Activated naive CD4-positive, alpha-beta T cell treated with anti-CD3 and anti-CD28 coated beads, Interleukin-2, amount 10 ng/mL, durations not matched to agents 7 days and 5 days (primary cell): ENCODE measurements at regions of chr3 and their contacts with region 1.

Region 1: GRCh38 chr3:107690522-107691138 is 167.9 kb downstream of the BBX start:
- DNase-seq: no peak
- H3K4me3 Mint-ChIP-seq: no peak overlapping the region
- H3K27ac Mint-ChIP-seq: no peak overlapping the region
- H3K4me1 Mint-ChIP-seq: peaks cover 2% of the 10 kb centered on the region
- H3K27me3 Mint-ChIP-seq: no peaks in the 10 kb centered on the region

Region 2: GRCh38 chr3:107588227-107588626 is 102.4 kb before region 1 on chr3:
- CTCF ChIA-PET with region 1: no interaction called
- DNase-seq: no peak
- H3K4me3 Mint-ChIP-seq: no peak overlapping the region
- H3K27ac Mint-ChIP-seq: no peak overlapping the region
- H3K4me1 Mint-ChIP-seq: peaks cover 12% of the 10 kb centered on the region
- H3K27me3 Mint-ChIP-seq: no peaks in the 10 kb centered on the region

Region 3: DNA sequence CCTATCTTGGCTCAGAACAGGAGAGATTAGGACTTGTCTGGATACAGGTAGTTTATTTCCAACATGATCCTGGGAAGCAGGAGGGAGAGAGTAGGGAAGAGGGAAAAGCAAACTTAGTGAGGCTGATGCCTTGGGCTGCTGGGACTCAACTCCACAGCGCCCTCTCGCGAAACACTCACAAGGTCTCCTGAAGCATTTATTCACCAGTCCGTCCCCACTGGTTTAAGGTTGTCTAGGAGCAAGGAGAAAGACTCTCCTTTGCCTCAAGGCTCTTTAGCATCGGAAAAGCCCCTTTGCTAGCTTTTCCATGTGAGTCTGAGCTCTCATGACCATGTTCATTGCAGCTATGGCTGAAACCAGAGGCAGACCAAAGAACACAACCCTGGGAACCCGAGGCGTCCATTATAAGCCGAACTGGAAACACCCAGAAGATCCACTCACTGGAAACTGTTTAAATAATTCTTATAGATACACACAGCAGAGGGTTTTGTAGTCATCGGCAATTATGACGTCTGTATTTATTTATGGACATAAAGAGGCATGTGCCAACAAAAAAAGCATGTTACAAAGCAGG is 155.7 kb after region 1 on chr3:
- CTCF ChIA-PET with region 1: interaction called, 11 read pairs
- DNase-seq: peak; percentile 54
- H3K4me3 Mint-ChIP-seq: no peak overlapping the region
- H3K27ac Mint-ChIP-seq: no peak overlapping the region
- H3K4me1 Mint-ChIP-seq: no peaks in the 10 kb centered on the region
- H3K27me3 Mint-ChIP-seq: peaks cover 9% of the 10 kb centered on the region